Naive thymus-derived CD4-positive, alpha-beta T cell (primary cell): ENCODE measurements at regions of chr10 and their contacts with region 1.

Region 1: GRCh38 chr10:97407211-97407951 is 6.2 kb upstream of the RRP12 start:
- DNase-seq: peak; percentile 35 to 78 (median 69)
- ATAC-seq: peak; percentile 96
- H3K4me3 ChIP-seq: peak overlapping the region; percentile 40
- H3K4me3 Mint-ChIP-seq: peak overlapping the region; percentile 10 to 79 (median 52)
- H3K27ac ChIP-seq: peak overlapping the region; percentile 54
- H3K27ac Mint-ChIP-seq: peak overlapping the region in 8 of 9 donors; percentile 14 to 84 (median 44)
- H3K4me1 ChIP-seq: peaks cover 4 to 7% of the 10 kb centered on the region in 2 donors
- H3K4me1 Mint-ChIP-seq: peaks cover 0 to 13% (median 9%) of the 10 kb centered on the region in 7 donors
- H3K27me3 ChIP-seq: no peaks in the 10 kb centered on the region
- H3K27me3 Mint-ChIP-seq: no peaks in the 10 kb centered on the region

Region 2: GRCh38 chr10:97425964-97426775 is 18.8 kb after region 1 on chr10 and contains the start of gene PGAM1:
- CTCF ChIA-PET with region 1: interaction called, 6 read pairs
- POLR2A ChIA-PET with region 1: interaction called, 4 read pairs
- intact Hi-C with region 1: loop called (anchors 1 kb)
- DNase-seq: peak; percentile 93 to 98 (median 97)
- ATAC-seq: peak; percentile 91
- H3K4me3 ChIP-seq: peak within 1 kb of the TSS; percentile 92
- H3K4me3 Mint-ChIP-seq: peak within 1 kb of the TSS; percentile 83 to 97 (median 95)
- H3K27ac ChIP-seq: peak within 1 kb of the TSS; percentile 87
- H3K27ac Mint-ChIP-seq: peak within 1 kb of the TSS; percentile 77 to 99 (median 95)
- H3K4me1 ChIP-seq: peaks cover 20 to 29% of the 10 kb centered on the region in 2 donors
- H3K4me1 Mint-ChIP-seq: peaks cover 10 to 53% (median 34%) of the 10 kb centered on the region in 7 donors
- H3K27me3 ChIP-seq: no peaks in the 10 kb centered on the region
- H3K27me3 Mint-ChIP-seq: peaks cover 0 to 2% (median 0%) of the 10 kb centered on the region in 5 donors
- total RNA-seq, gene PGAM1: 58.5 to 536 (median 69.8) TPM

Region 3: DNA sequence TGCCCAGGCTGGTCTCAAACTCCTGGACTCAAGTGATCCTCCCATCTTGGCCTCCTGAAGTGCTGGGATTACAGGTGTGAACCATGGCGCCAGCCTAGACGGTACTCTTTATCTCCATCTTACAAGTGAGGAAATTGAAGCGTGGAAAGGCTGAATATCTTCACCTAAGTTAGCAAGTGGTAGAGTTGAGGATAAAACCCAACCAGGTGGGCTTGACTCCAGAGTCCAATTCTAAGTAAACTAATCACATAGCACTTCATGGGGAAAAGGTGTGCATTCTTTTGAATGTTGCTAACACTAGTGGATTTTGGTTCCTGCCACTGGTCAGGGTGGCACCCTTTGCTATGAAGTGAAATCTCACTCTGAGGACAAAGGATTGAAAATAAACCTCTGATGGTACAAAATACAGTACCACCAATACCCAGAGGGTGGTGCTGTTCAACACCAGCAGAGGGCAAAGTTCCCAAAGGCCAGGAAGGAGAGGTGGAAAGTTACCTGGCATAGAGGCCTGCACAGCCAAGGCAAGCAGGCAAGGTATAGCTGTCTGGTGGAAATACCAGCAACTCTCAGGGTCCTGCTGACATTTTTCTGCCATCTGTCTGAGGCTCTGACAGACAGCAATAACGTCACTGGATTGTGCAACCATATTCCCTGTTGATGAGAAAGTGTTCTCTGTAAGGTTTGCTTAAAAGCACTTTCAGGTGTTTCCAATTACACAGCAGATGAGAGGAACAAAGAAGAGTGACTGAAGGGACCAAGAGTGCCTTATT is 56.2 kb after region 1 on chr10:
- CTCF ChIA-PET with region 1: interaction called, 3 read pairs
- POLR2A ChIA-PET with region 1: no interaction called
- intact Hi-C with region 1: loop called in 1 of 2 experiments (anchors 1 kb)
- DNase-seq: peak in 7 of 9 donors; percentile 31 to 55 (median 46)
- ATAC-seq: peak; percentile 82
- H3K4me3 ChIP-seq: no peak overlapping the region
- H3K4me3 Mint-ChIP-seq: no peak overlapping the region
- H3K27ac ChIP-seq: no peak overlapping the region
- H3K27ac Mint-ChIP-seq: peak overlapping the region in 7 of 9 donors; percentile 24 to 76 (median 50)
- H3K4me1 ChIP-seq: no peaks in the 10 kb centered on the region
- H3K4me1 Mint-ChIP-seq: peaks cover 0 to 3% (median 0%) of the 10 kb centered on the region in 7 donors
- H3K27me3 ChIP-seq: no peaks in the 10 kb centered on the region
- H3K27me3 Mint-ChIP-seq: no peaks in the 10 kb centered on the region

Region 4: DNA sequence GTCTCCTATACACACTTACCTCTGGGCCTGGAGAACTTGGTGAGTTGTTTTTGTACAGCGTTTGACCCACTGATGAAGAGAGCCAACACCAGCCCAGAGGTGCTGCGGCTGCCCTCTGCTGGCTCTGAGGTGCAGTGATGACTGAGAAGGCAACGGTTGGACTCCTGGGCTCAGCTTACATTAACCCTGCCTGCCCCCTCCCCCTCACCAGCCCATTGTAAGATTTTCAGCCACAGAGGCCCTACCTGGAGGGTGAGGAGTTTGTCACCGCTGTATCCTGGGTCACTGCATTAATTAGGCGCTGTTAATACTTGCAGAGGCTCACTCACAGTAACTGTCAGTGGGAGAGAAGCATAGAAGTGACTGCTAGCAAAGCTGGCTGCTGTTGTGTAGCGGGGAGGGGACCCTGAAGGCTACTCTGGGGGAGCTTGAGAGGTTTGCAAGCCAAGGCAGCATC is 146.2 kb after region 1 on chr10:
- CTCF ChIA-PET with region 1: interaction called, 9 read pairs
- POLR2A ChIA-PET with region 1: interaction called, 3 read pairs
- intact Hi-C with region 1: loop called (anchors 1 kb)
- DNase-seq: peak in 7 of 9 donors; percentile 27 to 60 (median 52)
- ATAC-seq: peak; percentile 64
- H3K4me3 ChIP-seq: no peak overlapping the region
- H3K4me3 Mint-ChIP-seq: no peak overlapping the region
- H3K27ac ChIP-seq: no peak overlapping the region
- H3K27ac Mint-ChIP-seq: no peak overlapping the region
- H3K4me1 ChIP-seq: no peaks in the 10 kb centered on the region
- H3K4me1 Mint-ChIP-seq: peaks cover 0 to 2% (median 0%) of the 10 kb centered on the region in 7 donors
- H3K27me3 ChIP-seq: no peaks in the 10 kb centered on the region
- H3K27me3 Mint-ChIP-seq: no peaks in the 10 kb centered on the region

Region 5: GRCh38 chr10:98309366-98310355 is 902.3 kb after region 1 on chr10:
- CTCF ChIA-PET with region 1: no interaction called
- POLR2A ChIA-PET with region 1: no interaction called
- intact Hi-C with region 1: no loop called
- DNase-seq: peak in 1 of 9 donors; percentile 29
- ATAC-seq: peak; percentile 60
- H3K4me3 ChIP-seq: no peak overlapping the region
- H3K4me3 Mint-ChIP-seq: no peak overlapping the region
- H3K27ac ChIP-seq: no peak overlapping the region
- H3K27ac Mint-ChIP-seq: no peak overlapping the region
- H3K4me1 ChIP-seq: no peaks in the 10 kb centered on the region
- H3K4me1 Mint-ChIP-seq: peaks cover 0 to 3% (median 0%) of the 10 kb centered on the region in 7 donors
- H3K27me3 ChIP-seq: no peaks in the 10 kb centered on the region
- H3K27me3 Mint-ChIP-seq: peaks cover 28 to 46% (median 35%) of the 10 kb centered on the region in 5 donors